Head of caudate nucleus (tissue), 42 donors: ENCODE measurements at regions of chr17 and their contacts with region 1.

Region 1: DNA sequence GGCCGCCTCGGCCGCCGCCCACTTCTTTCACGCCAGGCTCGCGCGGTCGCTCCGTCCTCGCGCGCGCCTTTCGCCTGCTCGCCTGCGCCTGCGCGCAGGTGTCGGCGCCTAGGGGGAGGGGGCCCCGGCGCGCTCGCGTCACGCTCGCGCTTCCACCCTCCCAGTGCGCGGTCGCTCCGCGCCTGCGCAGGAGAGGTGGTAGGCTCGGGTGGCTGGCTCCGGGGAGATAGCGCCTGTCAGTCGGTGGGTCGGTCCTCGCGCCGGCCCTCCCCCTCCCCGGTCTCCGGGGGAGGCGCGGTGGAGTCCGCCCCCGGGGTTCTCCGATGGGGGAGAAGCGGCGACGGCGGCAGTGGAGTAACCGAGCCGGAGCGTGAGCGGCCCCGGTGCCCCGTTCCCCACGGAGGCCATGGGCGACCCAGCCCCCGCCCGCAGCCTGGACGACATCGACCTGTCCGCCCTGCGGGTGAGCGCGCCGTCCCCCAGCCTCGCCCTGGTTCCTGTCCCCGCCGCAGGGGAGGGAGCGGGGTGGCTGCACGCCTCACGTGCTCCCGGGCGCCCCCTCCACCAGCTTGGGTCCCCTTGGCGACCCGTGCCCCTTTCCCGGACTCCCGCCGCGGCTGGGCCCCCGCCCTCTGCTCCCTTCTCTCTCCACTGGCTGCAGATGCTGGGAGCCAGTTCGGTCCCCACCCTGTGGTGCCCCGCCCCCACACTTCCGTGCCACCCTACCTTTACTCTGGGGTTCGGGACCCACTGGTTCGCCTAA is at the start of gene MINK1:
- DNase-seq: peak; percentile 55 to 94 (median 88)

Region 2: DNA sequence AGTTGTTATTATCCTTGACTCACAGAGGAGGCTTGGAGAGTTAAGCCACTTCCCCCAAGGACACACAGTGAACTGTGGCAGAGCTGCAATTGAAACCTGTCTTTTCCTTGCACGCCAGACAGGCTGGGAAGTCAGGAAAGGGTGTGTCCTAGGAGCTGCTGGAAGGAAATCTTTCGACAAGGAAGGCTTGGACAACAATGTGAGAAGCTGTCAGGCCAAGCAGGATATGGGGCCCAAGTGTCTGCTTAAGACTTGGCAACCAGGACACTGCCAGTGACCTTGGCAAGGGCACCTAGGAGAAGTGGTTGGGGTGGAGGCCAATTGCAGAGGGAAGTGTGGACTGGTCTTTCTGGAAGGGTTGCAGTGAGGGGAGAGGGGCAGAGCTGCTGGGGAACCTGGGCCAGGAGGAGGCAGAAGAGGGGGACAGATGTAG is 938.4 kb before region 1 on chr17:
- intact Hi-C with region 1: no loop called
- DNase-seq: peak in 2 of 42 donors; percentile 17 to 45

Region 3: GRCh38 chr17:4881761-4882555 is 48.6 kb after region 1 on chr17:
- intact Hi-C with region 1: loop called (anchors 10 kb)
- DNase-seq: peak in 41 of 42 donors; percentile 48 to 89 (median 75)